Lower lobe of right lung (tissue), 2 donors: ENCODE measurements at regions of chr11 and their contacts with region 1.

Region 1: DNA sequence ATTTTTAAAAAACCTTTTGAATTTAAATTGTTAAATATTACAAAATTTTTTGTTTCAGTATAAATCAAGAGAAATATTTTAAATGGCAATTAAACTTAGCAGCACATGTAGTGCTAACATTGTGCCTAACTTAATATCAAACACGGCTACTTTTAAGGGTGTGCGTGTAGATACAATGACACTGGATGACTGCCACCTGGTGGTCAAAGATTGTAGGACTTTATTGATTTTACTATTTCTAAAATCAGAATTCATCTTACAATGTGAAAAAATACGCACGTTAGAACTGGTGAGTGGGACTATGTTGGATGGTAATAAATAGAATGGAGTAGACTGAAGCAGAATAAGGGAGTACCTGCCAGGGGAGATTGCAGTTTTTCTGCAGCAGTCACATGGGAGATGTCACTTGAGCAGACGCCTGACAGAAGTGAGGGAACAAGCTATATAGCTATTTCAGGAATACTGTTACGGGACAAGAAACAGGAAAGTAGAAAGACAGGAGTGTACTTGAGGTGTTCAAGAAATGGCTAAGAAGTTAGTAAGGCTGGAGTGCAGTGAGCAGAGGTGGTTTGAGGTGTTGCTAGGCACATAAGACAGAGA is 52.9 kb downstream of the UVRAG start:
- DNase-seq: no peak
- ATAC-seq: peak; percentile 74 to 81
- H3K4me3 ChIP-seq: no peak overlapping the region
- H3K27ac ChIP-seq: no peak overlapping the region
- H3K4me1 ChIP-seq: peaks cover 26% of the 10 kb centered on the region
- H3K27me3 ChIP-seq: no peaks in the 10 kb centered on the region
- CTCF ChIP-seq: peak; percentile 81

Region 2: GRCh38 chr11:75802913-75803820 is 64.7 kb before region 1 on chr11:
- intact Hi-C with region 1: loop called (anchors 5 kb)
- DNase-seq: peak; percentile 68
- ATAC-seq: peak; percentile 89 to 91
- H3K4me3 ChIP-seq: no peak overlapping the region
- H3K27ac ChIP-seq: no peak overlapping the region
- H3K4me1 ChIP-seq: no peaks in the 10 kb centered on the region
- H3K27me3 ChIP-seq: no peaks in the 10 kb centered on the region
- CTCF ChIP-seq: peak; percentile 91